Cardiac septum (tissue), 1 donor: ENCODE measurements at regions of chr1 and their contacts with region 1.

Region 1: GRCh38 chr1:66725885-66726665 is 26.2 kb upstream of the DYNLT5 start:
- DNase-seq: no peak

Region 2: DNA sequence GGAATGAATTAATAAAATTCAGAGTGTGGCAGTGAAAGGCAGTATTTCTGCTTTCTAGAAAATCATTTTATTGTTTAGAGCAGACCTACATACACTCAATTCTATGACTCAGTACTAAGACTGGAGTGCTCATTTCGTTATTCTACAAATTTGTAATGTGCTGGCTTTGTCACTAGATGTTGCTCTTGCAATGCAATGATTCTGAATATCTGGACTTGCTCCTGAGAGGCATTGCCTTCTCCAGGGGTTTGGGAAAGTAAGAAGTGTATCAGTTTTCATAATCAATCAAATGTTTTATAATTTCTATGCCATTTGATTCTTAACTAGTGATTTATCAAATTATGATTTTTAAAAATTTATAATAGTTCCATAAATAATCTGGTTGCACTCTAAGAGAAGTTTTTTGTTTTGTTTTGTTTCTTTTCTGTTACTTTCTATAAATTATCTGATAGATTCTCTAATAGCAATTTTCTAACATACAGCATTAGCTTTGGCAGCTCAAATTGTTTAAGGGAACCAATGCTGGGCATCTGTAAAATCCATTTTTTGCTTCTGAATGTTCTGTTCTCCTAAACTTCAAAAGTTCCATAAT is 472.6 kb before region 1 on chr1:
- intact Hi-C with region 1: loop called (anchors 5 kb)
- DNase-seq: no peak

Region 3: GRCh38 chr1:66532798-66533783 is 193.0 kb before region 1 on chr1:
- intact Hi-C with region 1: no loop called
- DNase-seq: peak; percentile 73

Region 4: DNA sequence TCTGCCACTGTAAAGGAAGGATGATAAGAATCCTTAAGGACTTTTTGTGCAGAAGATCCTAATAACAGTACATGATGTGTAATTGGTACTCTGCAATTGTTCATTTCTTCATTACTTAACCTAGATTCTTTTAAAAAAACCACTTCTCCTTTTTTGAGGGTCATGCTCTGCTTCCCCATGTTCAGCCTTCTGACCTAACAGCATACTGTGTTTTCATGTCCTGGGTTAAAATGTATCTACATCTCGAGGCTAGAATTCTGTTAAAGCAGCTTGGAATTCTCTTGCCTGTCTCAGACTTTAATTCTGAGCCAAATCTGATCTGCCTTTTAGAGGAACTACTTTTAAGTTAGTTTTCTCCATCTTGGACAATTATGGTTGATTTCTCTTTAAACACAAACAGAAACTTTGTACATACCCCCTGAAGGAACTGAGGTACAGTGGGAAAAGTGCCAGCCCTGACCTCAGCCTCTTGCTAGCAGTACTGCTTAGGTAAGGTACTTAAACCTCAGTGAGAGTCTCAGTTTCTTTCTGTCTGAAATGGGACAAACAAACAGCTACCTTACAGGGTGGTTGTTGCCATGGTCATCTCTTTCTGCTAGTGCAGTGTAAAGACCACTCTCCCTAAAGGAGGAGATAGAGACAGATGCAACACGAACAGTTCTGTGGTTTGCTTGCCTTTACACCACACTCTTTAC is 77.0 kb before region 1 on chr1:
- intact Hi-C with region 1: no loop called
- DNase-seq: no peak